ENCODE measurements at regions of chr1 and their contacts with region 1.

Region 1: GRCh38 chr1:51192213-51192843 is 43.7 kb upstream of the RNF11 start:
- DNase-seq: peak; percentile 74
- H3K4me3 ChIP-seq: no peak overlapping the region
- H3K27ac ChIP-seq: no peak overlapping the region
- H3K4me1 ChIP-seq: no peaks in the 10 kb centered on the region
- H3K27me3 ChIP-seq: no peaks in the 10 kb centered on the region
- CTCF ChIP-seq: peak; percentile 76

Region 2: DNA sequence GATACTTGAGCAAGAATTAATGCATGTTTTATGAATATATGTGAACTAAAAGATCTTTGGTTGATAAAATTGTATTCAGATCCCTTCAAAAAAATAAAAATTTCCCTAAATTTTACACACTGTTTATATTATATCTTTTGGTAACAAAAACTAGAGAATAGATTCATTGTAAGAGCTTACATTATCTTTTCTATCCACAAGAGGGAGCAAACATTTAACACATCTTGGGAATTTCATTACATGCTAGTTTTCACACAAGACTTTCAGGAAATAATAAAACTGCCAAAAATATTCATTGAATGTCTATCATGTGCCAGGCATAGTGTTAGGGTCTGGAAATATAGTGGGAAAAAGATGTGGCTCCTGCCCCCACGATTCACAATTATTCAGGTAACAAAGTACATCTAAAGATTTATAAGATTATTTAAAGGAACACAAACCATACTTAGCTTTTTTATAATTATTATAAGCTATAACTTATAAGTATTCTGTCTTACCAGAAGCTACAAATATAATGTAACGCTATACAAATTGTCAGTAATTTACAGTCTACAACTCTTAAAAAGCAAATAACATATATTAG is 262.9 kb before region 1 on chr1:
- intact Hi-C with region 1: loop called (anchors 5 kb)
- DNase-seq: no peak
- H3K4me3 ChIP-seq: no peak overlapping the region
- H3K27ac ChIP-seq: no peak overlapping the region
- H3K4me1 ChIP-seq: no peaks in the 10 kb centered on the region
- H3K27me3 ChIP-seq: no peaks in the 10 kb centered on the region
- CTCF ChIP-seq: peak; percentile 53

Region 3: GRCh38 chr1:51218570-51218969 is 26.2 kb after region 1 on chr1:
- intact Hi-C with region 1: no loop called
- DNase-seq: no peak
- H3K4me3 ChIP-seq: no peak overlapping the region
- H3K27ac ChIP-seq: no peak overlapping the region
- H3K4me1 ChIP-seq: no peaks in the 10 kb centered on the region
- H3K27me3 ChIP-seq: no peaks in the 10 kb centered on the region
- CTCF ChIP-seq: no peak

Region 4: GRCh38 chr1:51294566-51295184 is 102.3 kb after region 1 on chr1:
- intact Hi-C with region 1: loop called (anchors 5 kb)
- DNase-seq: no peak
- H3K4me3 ChIP-seq: no peak overlapping the region
- H3K27ac ChIP-seq: no peak overlapping the region
- H3K4me1 ChIP-seq: no peaks in the 10 kb centered on the region
- H3K27me3 ChIP-seq: no peaks in the 10 kb centered on the region
- CTCF ChIP-seq: no peak